ENCODE measurements at regions of chr17 and their contacts with region 1.

Region 1: DNA sequence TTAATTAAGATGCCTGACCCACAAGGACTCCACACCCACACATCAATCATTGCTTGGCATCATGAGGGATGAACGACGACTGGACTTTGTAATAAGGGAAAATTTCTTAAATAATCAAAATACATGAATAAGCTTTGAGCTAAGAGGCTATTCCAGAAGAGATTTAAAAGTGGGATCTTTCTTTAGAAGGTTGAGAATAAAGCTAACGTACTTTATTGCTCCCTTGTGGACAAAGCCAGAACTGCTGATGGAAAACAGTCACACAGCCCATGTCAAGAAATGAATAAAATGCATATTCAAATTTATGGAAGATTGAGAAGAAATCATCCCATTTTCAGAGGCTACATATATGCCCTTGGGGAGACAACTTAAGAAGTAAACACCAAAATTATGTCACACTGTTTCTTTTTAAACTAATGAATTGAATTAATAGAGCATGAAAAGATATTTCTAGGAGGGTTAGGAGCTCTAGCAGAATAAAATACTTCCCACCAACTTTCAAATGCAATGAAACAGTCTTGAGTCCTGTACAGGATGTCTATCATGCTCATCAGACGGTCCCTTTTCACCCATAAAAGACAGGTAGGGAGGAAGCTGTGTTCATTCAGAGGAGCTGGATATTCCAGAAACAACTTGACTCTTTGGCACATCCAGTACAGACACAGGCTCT is 60.2 kb upstream of the PHOSPHO1 start:
- DNase-seq: peak; percentile 39
- H3K4me3 Mint-ChIP-seq: no peak overlapping the region
- H3K27ac Mint-ChIP-seq: no peak overlapping the region
- H3K4me1 Mint-ChIP-seq: no peaks in the 10 kb centered on the region
- H3K27me3 Mint-ChIP-seq: no peaks in the 10 kb centered on the region
- CTCF ChIP-seq: peak; percentile 55

Region 2: GRCh38 chr17:49260011-49260921 is 30.6 kb before region 1 on chr17:
- CTCF ChIA-PET with region 1: interaction called, 7 read pairs
- intact Hi-C with region 1: loop called (anchors 2 kb)
- DNase-seq: peak; percentile 61
- H3K4me3 Mint-ChIP-seq: peak overlapping the region; percentile 73
- H3K27ac Mint-ChIP-seq: no peak overlapping the region
- H3K4me1 Mint-ChIP-seq: peaks cover 8% of the 10 kb centered on the region
- H3K27me3 Mint-ChIP-seq: peaks cover 11% of the 10 kb centered on the region
- CTCF ChIP-seq: no peak

Measured in Calu3 (cell line).